ENCODE measurements at regions of chr7 and their contacts with region 1.

Region 1: DNA sequence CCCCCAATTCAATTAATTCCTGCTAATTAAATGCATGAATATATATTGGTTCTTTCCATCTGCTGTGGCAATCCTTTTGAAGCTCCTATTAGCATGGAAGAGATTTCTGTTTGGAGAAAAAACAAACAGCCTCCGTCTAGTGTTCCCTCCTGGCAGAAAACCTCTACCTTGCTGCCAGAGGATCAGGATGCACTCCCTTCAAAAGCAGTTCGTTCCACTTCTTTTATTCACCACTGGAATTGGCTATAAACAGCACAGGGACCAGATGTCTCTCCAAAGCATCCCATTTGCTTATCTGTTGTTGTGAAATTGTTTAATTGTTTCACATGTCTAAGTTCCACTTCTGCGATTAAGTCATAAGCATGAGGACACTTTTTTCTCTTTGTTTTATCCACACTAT is 77.8 kb upstream of the PTN start:
- DNase-seq: peak; percentile 49
- H3K4me3 ChIP-seq: no peak overlapping the region
- H3K27ac ChIP-seq: no peak overlapping the region
- H3K27me3 ChIP-seq: no peaks in the 10 kb centered on the region
- CTCF ChIP-seq: no peak

Region 2: GRCh38 chr7:137434947-137435346 is 13.6 kb after region 1 on chr7:
- CTCF ChIA-PET with region 1: no interaction called
- POLR2A ChIA-PET with region 1: interaction called, 11 read pairs
- DNase-seq: no peak
- H3K4me3 ChIP-seq: no peak overlapping the region
- H3K27ac ChIP-seq: no peak overlapping the region
- H3K27me3 ChIP-seq: no peaks in the 10 kb centered on the region
- CTCF ChIP-seq: no peak

Region 3: DNA sequence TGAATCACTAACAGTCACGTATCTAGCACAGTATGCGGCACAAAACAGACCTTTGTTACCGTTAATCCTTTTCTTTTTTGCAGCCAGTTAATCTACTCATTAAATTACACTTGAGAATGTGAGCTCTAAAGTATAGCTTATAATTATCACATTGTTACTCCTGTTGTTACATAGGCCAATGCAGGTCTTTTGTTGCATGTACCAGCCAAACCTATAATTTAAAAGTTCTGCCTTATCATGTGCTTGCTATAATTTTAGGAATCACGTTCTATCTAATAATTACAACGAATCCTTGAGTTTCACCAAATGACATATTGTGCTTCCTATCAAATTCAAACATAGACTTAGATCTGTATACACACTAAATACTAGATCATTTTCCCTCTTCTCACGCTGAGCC is 180.3 kb after region 1 on chr7:
- CTCF ChIA-PET with region 1: no interaction called
- POLR2A ChIA-PET with region 1: no interaction called
- DNase-seq: no peak
- H3K4me3 ChIP-seq: no peak overlapping the region
- H3K27ac ChIP-seq: no peak overlapping the region
- H3K27me3 ChIP-seq: no peaks in the 10 kb centered on the region
- CTCF ChIP-seq: no peak

Region 4: GRCh38 chr7:137619181-137619580 is 197.8 kb after region 1 on chr7:
- CTCF ChIA-PET with region 1: interaction called, 13 read pairs
- POLR2A ChIA-PET with region 1: no interaction called
- DNase-seq: no peak
- H3K4me3 ChIP-seq: no peak overlapping the region
- H3K27ac ChIP-seq: no peak overlapping the region
- H3K27me3 ChIP-seq: no peaks in the 10 kb centered on the region
- CTCF ChIP-seq: no peak